CD14-positive monocyte (primary cell): ENCODE measurements at regions of chr4 and their contacts with region 1.

Region 1: GRCh38 chr4:16537926-16538325 is 311.7 kb upstream of the TAPT1 start:
- DNase-seq: no peak
- H3K4me3 ChIP-seq: no peak overlapping the region
- H3K4me3 Mint-ChIP-seq: no peak overlapping the region
- H3K27ac ChIP-seq: no peak overlapping the region
- H3K27ac Mint-ChIP-seq: no peak overlapping the region
- H3K4me1 ChIP-seq: no peaks in the 10 kb centered on the region
- H3K4me1 Mint-ChIP-seq: peaks cover 8% of the 10 kb centered on the region
- H3K27me3 ChIP-seq: no peaks in the 10 kb centered on the region
- H3K27me3 Mint-ChIP-seq: no peaks in the 10 kb centered on the region
- CTCF ChIP-seq: no peak

Region 2: DNA sequence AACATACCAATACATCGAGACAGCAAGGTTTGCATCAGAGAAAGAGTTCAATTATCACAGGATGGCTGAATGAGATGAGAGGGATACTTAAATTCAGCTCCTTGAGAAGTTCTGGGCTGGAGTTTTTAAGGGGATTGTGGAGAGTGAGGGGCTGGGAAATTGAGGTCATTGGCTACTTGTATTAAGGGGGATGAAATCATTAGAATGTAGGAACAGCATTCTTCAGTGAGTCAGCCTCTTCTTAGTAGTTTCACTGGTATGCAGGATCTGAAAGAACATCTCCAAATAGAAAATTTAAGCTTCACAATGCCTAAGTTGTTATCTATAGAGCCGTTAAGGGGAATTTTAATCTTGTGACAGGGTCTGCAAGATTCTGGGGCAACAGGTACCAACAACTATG is 100.1 kb before region 1 on chr4:
- intact Hi-C with region 1: no loop called
- DNase-seq: no peak
- H3K4me3 ChIP-seq: no peak overlapping the region
- H3K4me3 Mint-ChIP-seq: no peak overlapping the region
- H3K27ac ChIP-seq: no peak overlapping the region
- H3K27ac Mint-ChIP-seq: no peak overlapping the region
- H3K4me1 ChIP-seq: no peaks in the 10 kb centered on the region
- H3K4me1 Mint-ChIP-seq: no peaks in the 10 kb centered on the region
- H3K27me3 ChIP-seq: no peaks in the 10 kb centered on the region
- H3K27me3 Mint-ChIP-seq: peaks cover 0 to 2% (median 1%) of the 10 kb centered on the region in 3 donors
- CTCF ChIP-seq: no peak

Region 3: GRCh38 chr4:16496501-16496900 is 41.4 kb before region 1 on chr4:
- intact Hi-C with region 1: loop called in 1 of 2 experiments (anchors 2 kb)
- DNase-seq: no peak
- H3K4me3 ChIP-seq: no peak overlapping the region
- H3K4me3 Mint-ChIP-seq: no peak overlapping the region
- H3K27ac ChIP-seq: no peak overlapping the region
- H3K27ac Mint-ChIP-seq: no peak overlapping the region
- H3K4me1 ChIP-seq: no peaks in the 10 kb centered on the region
- H3K4me1 Mint-ChIP-seq: no peaks in the 10 kb centered on the region
- H3K27me3 ChIP-seq: no peaks in the 10 kb centered on the region
- H3K27me3 Mint-ChIP-seq: peaks cover 0 to 4% (median 0%) of the 10 kb centered on the region in 3 donors
- CTCF ChIP-seq: no peak